BJ (cell line): ENCODE measurements at regions of chr5 and their contacts with region 1.

Region 1: DNA sequence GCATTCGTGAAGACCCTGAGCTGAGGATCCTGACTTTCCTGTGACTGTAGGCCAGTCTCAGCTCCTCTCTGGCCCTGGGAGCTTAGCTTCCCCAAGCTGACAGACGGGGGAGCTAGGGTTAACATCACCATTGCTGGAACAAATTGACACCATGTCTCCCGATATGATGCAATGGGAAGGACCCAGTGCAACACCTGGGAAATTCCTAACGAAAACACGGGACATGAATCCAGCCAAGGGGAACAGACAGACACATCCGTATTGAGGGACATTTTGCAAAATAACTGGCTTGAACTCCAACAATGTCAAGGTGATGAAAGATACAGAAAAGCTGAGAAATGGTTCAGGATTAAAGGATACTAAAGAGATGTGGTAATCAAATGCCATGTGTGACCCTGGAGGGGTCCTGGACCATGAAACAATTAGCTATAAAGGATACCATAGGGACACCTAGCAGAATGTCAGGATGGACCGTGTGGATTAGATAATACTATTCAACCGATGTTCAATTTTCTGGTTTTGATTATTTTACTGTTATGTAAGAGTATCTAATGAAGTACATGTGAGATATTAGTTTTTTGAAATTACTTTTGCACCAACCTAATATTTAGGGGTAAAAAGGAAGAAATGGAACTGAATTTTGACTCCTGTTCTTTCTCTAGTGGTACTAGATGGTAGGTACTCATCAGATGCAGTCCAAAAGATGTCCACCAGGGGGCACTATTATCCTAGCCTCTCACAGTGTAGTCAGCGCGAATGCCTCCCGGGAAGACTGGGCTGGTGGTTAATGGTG is 52.7 kb downstream of the NDST1 start:
- DNase-seq: no peak
- H3K4me3 ChIP-seq: no peak overlapping the region
- H3K27me3 ChIP-seq: no peaks in the 10 kb centered on the region
- CTCF ChIP-seq: peak; percentile 79

Region 2: DNA sequence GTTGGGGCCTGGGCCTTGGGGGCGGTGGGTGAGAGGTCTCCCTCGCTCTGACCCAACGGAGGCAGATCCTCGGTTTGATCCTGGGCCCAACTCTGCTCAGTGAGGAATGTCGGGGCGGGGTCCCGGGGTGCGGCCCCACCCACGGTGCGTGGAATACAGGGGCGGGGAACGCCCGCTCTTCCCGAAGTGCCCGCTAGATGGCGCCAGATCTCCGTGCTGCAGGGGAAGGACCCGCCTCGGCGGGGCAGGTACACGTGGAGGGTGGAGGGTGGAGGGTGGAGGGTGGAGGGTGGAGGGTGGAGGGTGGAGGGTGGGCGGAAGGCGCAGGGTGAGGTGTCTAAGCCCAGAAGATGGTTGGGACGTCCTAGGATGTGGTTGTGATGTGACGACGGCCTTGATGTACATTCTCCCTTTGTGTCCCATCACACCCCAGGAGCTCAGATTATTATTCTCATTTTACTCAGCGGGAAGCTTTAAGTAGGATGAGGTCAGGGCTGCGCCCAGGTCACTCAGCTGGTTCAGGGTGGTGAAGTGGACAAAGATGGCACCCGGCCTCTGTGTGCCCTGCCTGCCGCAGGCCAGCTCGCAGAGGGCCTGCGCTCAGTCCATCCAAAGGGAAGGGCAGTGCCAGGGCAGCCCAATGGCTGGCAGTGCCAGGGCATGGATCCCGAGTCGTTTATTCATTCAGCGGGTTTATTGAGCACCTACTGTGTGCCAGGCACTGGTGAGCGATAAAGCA is 101.6 kb before region 1 on chr5:
- CTCF ChIA-PET with region 1: interaction called, 43 read pairs
- POLR2A ChIA-PET with region 1: no interaction called
- DNase-seq: no peak
- H3K4me3 ChIP-seq: no peak overlapping the region; the same call in 1 of the 2 replicates
- H3K27me3 ChIP-seq: no peaks in the 10 kb centered on the region
- CTCF ChIP-seq: peak; percentile 85

Region 3: DNA sequence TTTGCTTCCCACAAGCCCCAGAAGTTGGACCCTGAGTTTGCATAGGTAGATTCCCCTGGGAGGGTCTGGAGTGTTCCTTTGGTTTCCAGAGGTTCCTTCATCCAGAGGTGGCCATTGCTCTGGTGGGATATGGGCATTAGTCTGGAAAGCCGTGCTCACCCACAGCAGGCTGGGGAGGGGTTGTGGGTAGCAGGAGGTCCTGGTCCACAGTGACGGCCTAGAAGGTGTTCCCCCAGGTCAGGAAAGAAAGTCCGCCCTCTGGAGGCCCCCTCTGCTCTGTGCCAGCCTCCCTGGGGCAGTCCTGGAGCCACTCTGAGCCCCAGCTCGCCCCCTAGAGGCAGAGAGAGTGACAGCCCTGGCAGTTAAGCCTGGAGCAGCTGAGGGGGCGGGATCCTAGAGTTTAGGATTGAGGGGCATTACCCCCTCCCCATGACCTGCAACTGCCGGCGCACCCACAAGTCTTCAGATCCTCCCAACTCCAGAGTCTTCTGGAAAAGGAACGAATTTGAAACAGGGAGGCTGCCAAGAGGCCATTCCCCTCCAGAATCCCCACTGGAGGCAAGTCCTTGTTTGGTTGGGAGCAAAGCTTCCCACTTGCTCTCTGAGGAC is 15.9 kb before region 1 on chr5:
- CTCF ChIA-PET with region 1: interaction called, 11 read pairs
- POLR2A ChIA-PET with region 1: no interaction called
- DNase-seq: no peak
- H3K4me3 ChIP-seq: no peak overlapping the region
- H3K27me3 ChIP-seq: no peaks in the 10 kb centered on the region
- CTCF ChIP-seq: peak; percentile 87

Region 4: DNA sequence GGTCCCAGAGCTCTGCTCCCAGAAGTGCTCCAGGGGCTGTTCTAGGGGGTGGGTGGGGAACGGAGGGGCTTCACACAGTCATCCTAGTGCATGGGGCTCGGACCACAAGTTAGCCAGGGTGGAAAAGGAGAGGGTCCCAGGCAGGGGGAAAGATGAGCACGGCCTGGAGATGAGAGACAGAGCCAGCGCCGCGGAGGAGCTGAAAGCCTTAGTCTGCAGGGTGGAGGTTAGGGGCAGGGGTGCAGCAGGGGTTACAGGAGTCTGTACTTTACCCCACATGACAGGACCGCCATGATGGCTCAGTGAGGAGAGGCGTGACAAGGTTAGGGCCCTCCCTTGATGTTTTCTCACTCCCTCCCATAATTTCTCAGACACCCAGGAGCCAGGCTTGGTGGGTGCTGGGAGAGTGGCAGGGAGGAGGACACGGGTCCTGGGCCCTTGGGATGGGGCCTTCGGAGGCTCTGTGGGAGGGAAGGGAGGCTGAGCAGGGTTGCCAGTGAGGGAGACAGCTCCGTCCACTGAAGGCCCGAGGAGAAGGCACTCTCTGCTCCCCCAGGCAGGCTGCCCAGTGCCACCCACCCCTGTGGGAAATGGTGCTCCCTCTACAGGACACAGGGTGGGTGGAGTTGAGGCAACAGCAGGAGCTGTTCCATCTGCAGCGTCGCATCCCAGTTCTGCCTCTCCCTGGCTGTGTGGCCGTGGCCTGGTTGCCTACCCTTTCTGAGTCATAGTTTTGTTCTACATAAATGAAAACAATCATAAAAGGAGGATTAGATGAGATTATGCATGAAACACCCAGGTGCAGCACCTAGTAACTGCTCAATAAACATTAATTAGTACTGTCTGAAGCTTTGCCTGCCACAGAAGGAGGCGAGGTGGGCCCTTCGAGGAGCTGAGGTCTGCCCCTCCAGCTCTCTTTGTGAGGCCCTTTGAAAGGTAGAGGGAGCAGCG is 13.5 kb after region 1 on chr5:
- CTCF ChIA-PET with region 1: interaction called, 11 read pairs
- POLR2A ChIA-PET with region 1: no interaction called
- DNase-seq: no peak
- H3K4me3 ChIP-seq: no peak overlapping the region
- H3K27me3 ChIP-seq: no peaks in the 10 kb centered on the region
- CTCF ChIP-seq: no peak

Region 5: GRCh38 chr5:150700594-150701293 is 140.1 kb after region 1 on chr5 and contains the start of gene RBM22:
- CTCF ChIA-PET with region 1: interaction called, 24 read pairs
- POLR2A ChIA-PET with region 1: no interaction called
- DNase-seq: peak; percentile 48
- H3K4me3 ChIP-seq: peak within 1 kb of the TSS; percentile 83
- H3K27me3 ChIP-seq: no peaks in the 10 kb centered on the region
- CTCF ChIP-seq: peak; percentile 76
- polyA plus RNA-seq, gene RBM22: 31.4 and 45.2 TPM in 2 replicates